SK-N-SH (cell line): ENCODE measurements at regions of chr12 and their contacts with region 1.

Region 1: GRCh38 chr12:69290545-69291277 is 51.3 kb downstream of the CPSF6 start:
- DNase-seq: peak; percentile 66
- H3K4me3 ChIP-seq: no peak overlapping the region
- H3K27ac ChIP-seq: no peak overlapping the region
- H3K4me1 ChIP-seq: no peaks in the 10 kb centered on the region
- H3K27me3 ChIP-seq: peaks cover 20% of the 10 kb centered on the region; the same call in 1 of the 2 replicates
- CTCF ChIP-seq: peak; percentile 73
- EP300 ChIP-seq: no peak
- RAD21 ChIP-seq: peak; percentile 89

Region 2: GRCh38 chr12:69275471-69275891 is 15.2 kb before region 1 on chr12:
- CTCF ChIA-PET with region 1: interaction called, 16 read pairs
- POLR2A ChIA-PET with region 1: no interaction called
- DNase-seq: no peak
- H3K4me3 ChIP-seq: no peak overlapping the region
- H3K27ac ChIP-seq: no peak overlapping the region
- H3K4me1 ChIP-seq: no peaks in the 10 kb centered on the region
- H3K27me3 ChIP-seq: no peaks in the 10 kb centered on the region
- CTCF ChIP-seq: no peak
- EP300 ChIP-seq: no peak
- RAD21 ChIP-seq: no peak